Activated CD8-positive, alpha-beta memory T cell treated with anti-CD3 and anti-CD28 coated beads, Interleukin-2, amount 10 ng/mL, durations not matched to agents 7 days and 5 days (primary cell): ENCODE measurements at regions of chr2 and their contacts with region 1.

Region 1: GRCh38 chr2:160994141-160995002 is 165.9 kb upstream of the TANK start:
- DNase-seq: peak; percentile 80
- ATAC-seq: peak; percentile 85
- H3K4me3 Mint-ChIP-seq: no peak overlapping the region
- H3K27ac Mint-ChIP-seq: no peak overlapping the region
- H3K4me1 Mint-ChIP-seq: peaks cover 7% of the 10 kb centered on the region
- H3K27me3 Mint-ChIP-seq: peaks cover 3% of the 10 kb centered on the region

Region 2: DNA sequence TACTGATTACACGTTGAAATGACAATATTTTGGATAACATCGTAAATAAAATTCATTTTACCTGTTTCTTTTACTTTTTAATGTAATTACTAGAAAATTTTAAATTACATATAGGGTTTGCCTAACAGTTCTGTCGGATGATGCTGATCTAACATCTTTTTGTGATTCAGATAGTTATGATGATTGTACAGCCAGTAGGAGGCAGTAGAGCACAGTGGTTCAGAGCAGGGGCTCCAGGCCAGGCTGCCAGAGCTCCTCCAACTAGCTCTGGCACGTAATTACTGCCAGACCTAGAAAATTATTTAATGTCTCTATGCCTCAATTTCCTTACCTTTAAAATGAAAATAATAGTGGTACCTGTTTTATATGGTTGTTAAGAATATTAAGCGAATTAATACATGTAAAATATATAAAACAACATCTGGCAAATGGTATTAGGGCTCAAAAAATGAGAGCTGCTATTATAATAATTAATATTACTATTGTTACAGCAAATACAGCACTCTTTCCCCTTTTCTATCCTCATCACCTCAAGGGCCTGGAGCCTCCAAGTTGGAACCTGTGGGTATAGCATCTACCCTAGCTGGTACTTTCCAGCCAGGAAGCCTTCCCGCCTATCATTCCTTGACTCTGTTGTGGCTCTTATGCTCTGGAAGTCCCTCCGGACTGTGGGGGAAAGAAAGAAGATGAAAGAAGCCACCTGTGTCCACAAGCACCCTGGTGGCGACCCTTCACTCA is 884.3 kb before region 1 on chr2:
- CTCF ChIA-PET with region 1: interaction called, 10 read pairs
- DNase-seq: peak; percentile 50
- ATAC-seq: peak; percentile 64
- H3K4me3 Mint-ChIP-seq: no peak overlapping the region
- H3K27ac Mint-ChIP-seq: no peak overlapping the region
- H3K4me1 Mint-ChIP-seq: peaks cover 2% of the 10 kb centered on the region
- H3K27me3 Mint-ChIP-seq: peaks cover 45% of the 10 kb centered on the region

Region 3: DNA sequence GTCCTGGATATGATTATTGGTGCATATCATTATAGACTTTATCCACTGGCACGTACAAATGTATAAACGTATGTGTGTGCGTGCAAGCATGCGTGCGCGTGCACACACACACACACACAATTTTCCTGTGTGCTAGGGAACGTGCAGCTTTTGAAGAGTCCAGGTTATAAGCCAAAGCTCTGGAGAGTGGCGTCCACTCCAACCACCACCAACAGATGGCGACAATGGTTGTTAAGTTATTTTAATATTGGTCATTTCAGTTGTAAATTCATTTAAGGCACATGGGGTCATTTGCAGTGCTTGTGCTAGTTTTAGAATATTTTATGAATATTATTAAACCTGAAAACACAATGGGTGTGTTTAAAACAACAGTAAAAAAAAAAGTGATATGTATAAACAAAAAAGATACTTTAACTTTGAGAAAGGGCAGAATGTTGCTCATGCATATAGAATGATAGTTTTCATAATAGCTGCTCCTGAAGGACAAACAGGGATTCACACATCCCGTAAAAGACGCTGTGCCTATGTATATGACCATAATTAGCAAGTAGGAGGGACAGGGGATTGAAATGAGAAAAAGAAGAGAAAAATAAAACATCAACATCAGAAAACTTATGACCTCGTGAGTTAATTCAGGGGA is 670.1 kb before region 1 on chr2:
- CTCF ChIA-PET with region 1: interaction called, 19 read pairs
- DNase-seq: peak; percentile 64
- ATAC-seq: no peak
- H3K4me3 Mint-ChIP-seq: no peak overlapping the region
- H3K27ac Mint-ChIP-seq: no peak overlapping the region
- H3K4me1 Mint-ChIP-seq: peaks cover 47% of the 10 kb centered on the region
- H3K27me3 Mint-ChIP-seq: peaks cover 7% of the 10 kb centered on the region

Region 4: DNA sequence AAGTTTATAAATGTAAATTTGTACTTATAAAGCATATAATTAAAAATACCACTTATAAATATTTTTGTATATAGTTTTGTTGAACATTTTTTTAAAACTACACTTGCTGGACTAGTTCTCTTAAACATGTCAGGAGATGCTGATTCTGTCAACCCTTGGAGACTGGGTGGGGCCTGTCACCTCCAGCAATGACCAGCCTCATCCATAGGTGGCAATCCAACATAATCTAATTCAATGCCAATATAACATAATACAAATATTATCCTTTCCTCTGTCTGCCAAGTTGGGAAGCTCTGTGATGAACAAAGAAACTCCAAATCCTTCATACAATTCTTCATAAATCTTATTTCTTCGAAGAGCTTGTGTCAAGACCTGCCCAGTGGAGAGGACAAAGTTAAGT is 641.2 kb before region 1 on chr2:
- CTCF ChIA-PET with region 1: interaction called, 12 read pairs
- DNase-seq: no peak
- ATAC-seq: peak; percentile 76
- H3K4me3 Mint-ChIP-seq: no peak overlapping the region
- H3K27ac Mint-ChIP-seq: no peak overlapping the region
- H3K4me1 Mint-ChIP-seq: peaks cover 10% of the 10 kb centered on the region
- H3K27me3 Mint-ChIP-seq: no peaks in the 10 kb centered on the region

Region 5: DNA sequence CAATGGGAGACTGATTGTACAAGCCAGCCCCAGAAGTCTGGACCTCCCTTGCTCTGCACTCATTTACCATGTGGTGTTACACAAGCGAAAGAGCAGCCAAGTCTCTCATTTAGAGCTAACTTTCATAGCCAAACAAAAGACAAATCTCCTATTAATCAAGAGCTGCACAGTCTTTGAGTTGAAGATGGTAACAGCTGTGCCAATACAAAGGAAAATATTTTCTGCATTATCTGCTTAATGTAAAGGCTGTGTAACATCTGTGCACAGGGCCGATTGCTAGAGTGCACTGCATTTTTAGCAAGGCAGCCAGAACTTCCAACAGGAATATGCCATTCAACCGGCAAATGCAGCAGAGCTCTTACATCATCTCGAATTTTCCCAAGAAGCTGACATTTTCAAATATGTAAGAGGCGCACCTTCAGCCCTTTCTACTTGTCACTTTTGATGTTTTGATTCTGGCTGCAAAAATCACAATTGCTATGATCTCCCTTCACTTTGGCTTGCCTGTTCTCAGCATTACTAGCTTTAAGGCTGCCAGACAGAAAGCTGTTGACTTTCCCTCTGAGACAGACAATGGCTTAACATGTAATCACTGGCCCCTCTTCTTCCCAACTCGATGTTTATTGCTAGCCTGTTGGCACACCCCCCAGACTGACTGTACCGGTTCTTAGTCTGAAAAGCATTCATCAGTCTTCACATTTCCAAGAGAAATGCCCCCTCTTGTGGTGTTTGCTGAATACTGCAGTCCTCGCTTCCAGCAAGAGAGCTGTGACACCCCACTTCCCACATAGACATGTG is 69.0 kb after region 1 on chr2:
- CTCF ChIA-PET with region 1: interaction called, 38 read pairs
- DNase-seq: peak; percentile 84
- ATAC-seq: peak; percentile 96
- H3K4me3 Mint-ChIP-seq: no peak overlapping the region
- H3K27ac Mint-ChIP-seq: no peak overlapping the region
- H3K4me1 Mint-ChIP-seq: peaks cover 9% of the 10 kb centered on the region
- H3K27me3 Mint-ChIP-seq: peaks cover 2% of the 10 kb centered on the region